ENCODE measurements at regions of chr10 and their contacts with region 1.

Region 1: DNA sequence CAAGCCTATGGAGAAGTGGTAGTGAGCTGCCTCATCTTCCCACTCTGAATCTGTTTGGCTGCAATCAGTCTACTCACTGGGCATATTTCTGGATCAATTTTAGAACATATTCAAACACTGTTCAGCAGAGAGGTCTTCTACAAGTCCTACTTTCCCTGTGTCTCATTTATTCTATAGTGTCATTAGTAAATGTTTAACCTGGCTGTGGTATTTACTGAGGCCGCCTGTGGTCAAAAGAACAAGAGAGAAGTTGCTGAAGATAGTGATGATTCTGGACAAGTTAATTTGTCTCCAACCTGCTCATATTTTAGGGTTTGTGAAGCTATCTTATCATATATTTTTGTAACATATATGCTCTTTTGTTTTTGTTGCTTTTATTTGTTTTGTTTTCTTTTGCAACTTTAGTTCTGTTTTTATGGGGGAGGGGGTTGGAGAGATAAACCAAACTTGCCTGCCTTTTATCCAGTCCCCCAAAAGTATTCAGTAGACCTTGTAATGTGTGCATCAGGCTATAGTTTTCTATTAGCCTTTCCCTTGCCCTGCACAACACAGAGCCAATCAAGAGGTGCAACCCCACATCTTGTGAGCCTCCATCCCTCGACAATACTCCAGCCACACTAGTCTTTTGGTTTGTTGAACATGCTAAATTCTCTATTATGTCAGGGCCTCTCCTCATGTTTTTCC is 362.8 kb upstream of the MBL2 start:
- DNase-seq: no peak
- H3K4me3 ChIP-seq: no peak overlapping the region
- H3K27ac ChIP-seq: no peak overlapping the region
- H3K4me1 ChIP-seq: peaks cover 17% of the 10 kb centered on the region
- H3K27me3 ChIP-seq: peaks cover 10 to 21% of the 10 kb centered on the region in 2 experiments
- CTCF ChIP-seq: no peak
- POLR2A ChIP-seq: no peak

Region 2: DNA sequence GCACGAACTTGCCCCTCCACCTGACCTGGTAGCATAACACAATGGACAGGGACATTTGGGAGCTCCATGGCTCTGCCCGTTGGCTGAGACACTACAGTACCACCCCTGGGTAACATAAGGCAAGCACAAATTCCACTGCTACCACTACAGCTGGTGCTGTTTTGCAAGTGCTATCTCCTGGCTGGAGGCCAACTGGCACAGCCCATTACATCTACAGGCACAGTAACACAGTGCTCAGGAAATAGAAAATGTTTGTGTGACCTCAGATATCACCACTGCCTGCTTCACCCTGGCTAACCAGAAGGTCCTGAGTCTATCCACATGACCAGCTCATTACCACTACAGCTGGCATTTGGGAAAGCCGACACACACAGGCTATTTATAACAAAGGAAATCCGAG is 268.3 kb after region 1 on chr10:
- CTCF ChIA-PET with region 1: no interaction called
- POLR2A ChIA-PET with region 1: no interaction called
- dilution Hi-C with region 1: no loop called
- intact Hi-C with region 1: loop called (anchors 10 kb)
- DNase-seq: peak; percentile 96
- H3K4me3 ChIP-seq: no peak overlapping the region
- H3K27ac ChIP-seq: peak overlapping the region; percentile 42
- H3K4me1 ChIP-seq: peaks cover 20% of the 10 kb centered on the region
- H3K27me3 ChIP-seq: no peaks in the 10 kb centered on the region
- CTCF ChIP-seq: no peak
- POLR2A ChIP-seq: no peak

Measured in endothelial cell of umbilical vein (primary cell).